ENCODE measurements at regions of chr1 and their contacts with region 1.

Region 1: DNA sequence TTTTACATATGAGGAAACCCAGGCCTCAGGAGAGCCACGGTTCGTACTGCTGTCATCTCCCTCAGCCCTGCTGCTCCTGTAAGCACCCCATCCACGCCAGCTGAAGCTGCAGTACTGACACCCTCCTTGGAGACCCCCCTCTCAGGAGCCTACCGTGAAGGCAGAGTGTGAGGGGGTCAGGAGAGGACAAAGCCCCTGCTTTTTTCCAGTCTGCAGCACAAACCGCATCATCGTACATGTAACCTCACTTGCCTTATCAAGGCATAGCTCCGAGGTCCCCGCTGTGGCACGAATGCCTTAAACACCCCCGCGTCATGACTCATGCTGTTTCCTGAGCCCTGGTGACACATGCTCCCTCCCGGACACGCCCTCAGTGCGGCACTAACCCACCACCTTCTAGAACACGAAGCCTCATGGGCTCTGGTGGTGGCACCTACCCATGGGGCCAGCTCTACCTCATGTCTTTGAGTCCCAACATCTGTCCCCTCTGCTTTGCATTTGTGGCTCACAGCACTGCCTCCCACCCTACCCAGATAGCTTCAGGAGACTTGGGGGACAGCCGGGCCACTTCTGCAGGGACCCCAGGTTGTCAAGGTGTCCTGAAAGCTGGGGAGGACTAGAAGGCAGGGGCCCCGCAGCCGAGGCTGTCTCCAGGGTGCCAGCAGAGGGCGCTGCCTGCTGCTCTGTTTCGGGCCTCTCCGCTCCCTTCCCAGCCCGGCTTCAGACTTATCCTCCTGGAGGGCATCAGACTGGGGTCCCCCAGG is 4.9 kb downstream of the SH3BGRL3 start:
- DNase-seq: peak; percentile 91 to 99 (median 93)
- ATAC-seq: peak; percentile 73
- H3K4me3 ChIP-seq: no peak overlapping the region
- H3K27ac ChIP-seq: peak overlapping the region; percentile 86
- H3K4me1 ChIP-seq: peaks cover 84 to 99% of the 10 kb centered on the region in 2 experiments
- H3K27me3 ChIP-seq: no peaks in the 10 kb centered on the region
- CTCF ChIP-seq: peak; percentile 89 to 97 (median 92)
- EP300 ChIP-seq: peak; percentile 91
- POLR2A ChIP-seq: peak; percentile 27; the same call in 1 of the 2 replicates
- RAD21 ChIP-seq: peak; percentile 79 to 92

Region 2: DNA sequence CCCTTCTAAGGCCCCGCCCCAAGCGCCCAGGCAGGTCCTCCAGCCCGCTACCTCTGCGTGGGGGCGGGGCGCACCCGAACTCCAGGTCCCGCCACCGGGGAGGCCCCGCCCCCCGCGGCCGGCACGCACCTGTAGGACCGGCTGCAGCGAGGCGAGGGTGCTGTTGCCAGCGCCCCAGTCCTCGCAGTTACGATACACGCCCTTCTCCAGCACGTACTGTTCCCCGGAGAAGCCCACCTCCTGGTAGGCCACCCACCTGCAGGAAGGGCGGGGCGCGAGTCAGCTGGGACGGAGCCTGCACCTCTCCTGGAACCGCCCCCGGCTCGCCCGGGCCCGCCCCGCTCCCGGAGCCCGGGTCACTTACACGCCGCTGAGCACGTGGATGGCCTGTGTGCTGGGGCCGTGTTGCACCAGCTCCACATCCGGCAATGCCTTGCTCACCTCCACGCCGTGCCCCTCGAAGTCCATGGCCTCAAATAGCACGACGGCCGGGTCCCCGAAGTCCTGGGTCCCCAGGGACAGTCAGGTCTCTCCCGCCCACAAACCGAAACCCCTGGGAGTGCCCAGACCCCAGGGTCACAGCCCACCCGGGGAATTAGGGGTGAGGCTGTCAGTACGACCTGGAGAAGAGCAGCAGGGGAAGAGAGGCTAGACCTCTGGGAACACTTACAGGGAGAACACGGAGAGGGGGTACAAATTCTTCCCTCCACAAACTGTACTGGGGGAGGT is 51.9 kb after region 1 on chr1:
- CTCF ChIA-PET with region 1: interaction called, 4 read pairs
- POLR2A ChIA-PET with region 1: interaction called, 11 read pairs
- in situ Hi-C with region 1: no loop called
- intact Hi-C with region 1: no loop called
- DNase-seq: peak; percentile 96 to 100 (median 99)
- ATAC-seq: peak; percentile 95
- H3K4me3 ChIP-seq: peak overlapping the region; percentile 50
- H3K27ac ChIP-seq: peak overlapping the region; percentile 85
- H3K4me1 ChIP-seq: peaks cover 14 to 21% of the 10 kb centered on the region in 2 experiments
- H3K27me3 ChIP-seq: no peaks in the 10 kb centered on the region
- CTCF ChIP-seq: no peak
- EP300 ChIP-seq: peak; percentile 71
- POLR2A ChIP-seq: peak; percentile 74
- RAD21 ChIP-seq: 0 out of 4 replicates have a peak, but pooled peaks of 1 of the 2 experiments have one; percentile 24

Region 3: GRCh38 chr1:26417111-26417759 is 132.5 kb after region 1 on chr1:
- CTCF ChIA-PET with region 1: interaction called, 12 read pairs
- POLR2A ChIA-PET with region 1: interaction called, 5 read pairs
- in situ Hi-C with region 1: no loop called
- intact Hi-C with region 1: no loop called
- DNase-seq: peak; percentile 88 to 93 (median 90)
- ATAC-seq: peak; percentile 100
- H3K4me3 ChIP-seq: no peak overlapping the region
- H3K27ac ChIP-seq: no peak overlapping the region
- H3K4me1 ChIP-seq: peaks cover 4 to 6% of the 10 kb centered on the region in 2 experiments; a peak in 2 of 5 replicates
- H3K27me3 ChIP-seq: peaks cover 0 to 2% of the 10 kb centered on the region in 2 experiments; a peak in 1 of 5 replicates
- CTCF ChIP-seq: peak; percentile 96
- EP300 ChIP-seq: no peak
- POLR2A ChIP-seq: no peak
- RAD21 ChIP-seq: peak; percentile 68 to 87